A549 (cell line): ENCODE measurements at regions of chr2 and their contacts with region 1.

Region 1: GRCh38 chr2:26745609-26746327 is 18.3 kb upstream of the SLC35F6 start:
- DNase-seq: peak; percentile 84 to 88
- ATAC-seq: peak; percentile 89 to 94
- H3K4me3 ChIP-seq: no peak overlapping the region
- H3K27ac ChIP-seq: peak overlapping the region; percentile 53 to 94; a peak in 5 of 6 replicates
- H3K4me1 ChIP-seq: peaks cover 41% of the 10 kb centered on the region
- CTCF ChIP-seq: peak; percentile 99
- EP300 ChIP-seq: no peak
- POLR2A ChIP-seq: no peak
- RAD21 ChIP-seq: peak; percentile 100

Region 2: GRCh38 chr2:26503231-26503880 is 242.4 kb before region 1 on chr2:
- CTCF ChIA-PET with region 1: interaction called, 25 read pairs
- POLR2A ChIA-PET with region 1: no interaction called
- DNase-seq: peak; percentile 91 to 99
- ATAC-seq: peak; percentile 95 to 99
- H3K4me3 ChIP-seq: peak overlapping the region; percentile 63
- H3K27ac ChIP-seq: peak overlapping the region; percentile 82 to 91
- H3K4me1 ChIP-seq: peaks cover 5% of the 10 kb centered on the region; the same call in 1 of the 3 replicates
- CTCF ChIP-seq: peak; percentile 100
- EP300 ChIP-seq: no peak
- POLR2A ChIP-seq: peak; percentile 91
- RAD21 ChIP-seq: peak; percentile 45 to 84; a peak in 4 of 5 replicates

Region 3: GRCh38 chr2:26561918-26562810 is 183.6 kb before region 1 on chr2:
- CTCF ChIA-PET with region 1: interaction called, 14 read pairs
- POLR2A ChIA-PET with region 1: no interaction called
- DNase-seq: peak; percentile 64 to 92
- ATAC-seq: peak; percentile 84 to 93
- H3K4me3 ChIP-seq: peak overlapping the region; percentile 50
- H3K27ac ChIP-seq: peak overlapping the region; percentile 51 to 76
- H3K4me1 ChIP-seq: peaks cover 8% of the 10 kb centered on the region; the same call in 1 of the 3 replicates
- CTCF ChIP-seq: peak; percentile 51
- EP300 ChIP-seq: no peak
- POLR2A ChIP-seq: no peak
- RAD21 ChIP-seq: peak; percentile 13 to 49; a peak in 3 of 5 replicates

Region 4: GRCh38 chr2:26605195-26605998 is 140.4 kb before region 1 on chr2:
- CTCF ChIA-PET with region 1: interaction called, 736 read pairs
- POLR2A ChIA-PET with region 1: no interaction called
- DNase-seq: peak; percentile 73 to 78
- ATAC-seq: peak; percentile 79 to 93
- H3K4me3 ChIP-seq: no peak overlapping the region
- H3K27ac ChIP-seq: peak overlapping the region; percentile 57 to 80; a peak in 5 of 6 replicates
- H3K4me1 ChIP-seq: peaks cover 21% of the 10 kb centered on the region
- CTCF ChIP-seq: peak; percentile 97
- EP300 ChIP-seq: no peak
- POLR2A ChIP-seq: no peak
- RAD21 ChIP-seq: peak; percentile 99

Region 5: GRCh38 chr2:26647059-26647657 is 98.6 kb before region 1 on chr2:
- CTCF ChIA-PET with region 1: interaction called, 20 read pairs
- POLR2A ChIA-PET with region 1: no interaction called
- DNase-seq: no peak
- ATAC-seq: peak in 1 of 2 experiments; percentile 16; a peak in 2 of 6 replicates
- H3K4me3 ChIP-seq: no peak overlapping the region
- H3K27ac ChIP-seq: no peak overlapping the region
- H3K4me1 ChIP-seq: no peaks in the 10 kb centered on the region
- CTCF ChIP-seq: no peak
- EP300 ChIP-seq: no peak
- POLR2A ChIP-seq: no peak
- RAD21 ChIP-seq: no peak

Region 6: DNA sequence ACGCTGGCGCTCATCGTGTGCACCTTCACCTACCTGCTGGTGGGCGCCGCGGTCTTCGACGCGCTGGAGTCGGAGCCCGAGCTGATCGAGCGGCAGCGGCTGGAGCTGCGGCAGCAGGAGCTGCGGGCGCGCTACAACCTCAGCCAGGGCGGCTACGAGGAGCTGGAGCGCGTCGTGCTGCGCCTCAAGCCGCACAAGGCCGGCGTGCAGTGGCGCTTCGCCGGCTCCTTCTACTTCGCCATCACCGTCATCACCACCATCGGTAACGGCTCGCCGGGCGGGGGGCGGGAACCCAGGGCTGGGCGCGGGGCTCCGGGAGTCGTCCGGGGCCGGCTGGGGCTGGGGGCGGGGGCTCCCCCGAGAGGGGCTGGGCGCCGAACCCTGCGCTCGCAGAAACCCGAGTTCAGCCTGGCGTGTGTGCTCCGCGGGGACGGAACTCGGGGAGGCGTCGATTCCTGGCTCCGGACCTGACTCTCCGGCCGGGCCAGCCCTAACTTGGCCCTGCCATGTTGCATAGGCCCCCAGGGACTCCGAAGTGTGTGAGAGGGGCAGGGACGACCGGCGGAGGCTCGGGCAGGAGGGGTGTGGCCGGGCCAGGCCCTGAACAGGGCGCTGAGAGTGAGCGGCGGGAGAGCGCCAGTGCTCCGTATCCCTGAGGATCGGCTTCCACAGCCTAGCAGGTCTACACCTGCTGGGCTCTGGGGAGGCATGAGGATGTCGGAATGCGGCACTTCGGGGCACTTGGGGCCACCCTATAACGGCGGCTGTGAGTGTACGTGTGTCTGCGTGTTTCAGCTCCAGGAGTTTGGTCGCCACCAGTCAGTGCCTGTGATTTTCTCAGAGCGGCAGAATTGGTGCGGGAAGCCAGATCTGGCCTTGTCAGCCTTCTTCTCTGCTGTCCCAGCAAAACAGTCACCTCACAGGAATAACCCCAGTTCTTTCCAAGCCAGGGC is 52.6 kb before region 1 on chr2:
- CTCF ChIA-PET with region 1: interaction called, 27 read pairs
- POLR2A ChIA-PET with region 1: no interaction called
- DNase-seq: peak in 1 of 2 experiments; percentile 25
- ATAC-seq: peak; percentile 20 to 32; a peak in 4 of 6 replicates
- H3K4me3 ChIP-seq: peak overlapping the region; percentile 36
- H3K27ac ChIP-seq: peak overlapping the region in 1 of 2 experiments; percentile 40; a peak in 2 of 6 replicates
- H3K4me1 ChIP-seq: peaks cover 25% of the 10 kb centered on the region
- CTCF ChIP-seq: no peak
- EP300 ChIP-seq: no peak
- POLR2A ChIP-seq: no peak
- RAD21 ChIP-seq: no peak

Region 7: DNA sequence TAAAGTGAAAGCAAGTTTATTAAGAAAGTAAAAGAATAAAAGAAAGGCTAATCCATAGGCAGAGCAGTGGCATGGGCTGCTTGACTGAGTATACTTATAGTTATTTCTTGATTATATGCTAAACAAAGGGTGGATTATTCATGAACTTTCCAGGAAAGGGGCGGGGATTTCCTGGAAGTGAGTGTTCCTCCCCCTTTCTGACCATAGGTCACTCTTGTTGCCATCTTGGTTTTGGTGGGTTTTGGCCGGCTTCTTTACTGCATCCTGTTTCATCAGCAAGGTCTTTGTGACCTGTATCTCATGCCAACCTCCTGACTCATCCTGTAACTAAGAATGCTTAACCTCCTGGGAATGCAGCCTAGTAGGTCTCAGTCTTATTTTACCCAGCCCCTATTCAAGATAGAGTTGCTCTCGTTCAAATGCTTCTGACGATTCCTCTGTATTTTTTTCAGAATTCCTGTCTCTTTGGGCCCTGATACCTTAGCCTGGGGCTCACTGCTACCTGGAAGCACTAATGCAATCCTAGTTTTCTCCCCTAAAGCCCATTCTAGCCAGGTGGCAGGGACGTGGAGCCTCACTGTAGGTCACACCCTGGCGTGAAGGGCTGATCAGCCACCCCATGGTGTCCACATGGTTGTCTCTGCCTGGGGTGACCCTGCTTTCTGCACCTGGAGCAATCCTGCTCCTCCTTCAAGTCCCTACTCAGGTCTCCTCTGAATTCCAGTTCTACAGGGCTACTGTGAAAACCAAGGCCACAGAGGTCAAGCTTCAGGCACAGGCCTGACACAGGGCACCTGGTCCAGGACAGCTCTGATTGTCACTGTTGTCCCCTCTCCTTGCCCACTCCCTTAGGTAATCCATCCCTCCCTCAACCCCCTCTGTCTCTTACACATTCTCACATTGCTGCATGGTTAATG is 12.4 kb after region 1 on chr2:
- CTCF ChIA-PET with region 1: interaction called, 51 read pairs
- POLR2A ChIA-PET with region 1: no interaction called
- DNase-seq: peak; percentile 70 to 98
- ATAC-seq: peak; percentile 70 to 91
- H3K4me3 ChIP-seq: no peak overlapping the region
- H3K27ac ChIP-seq: peak overlapping the region; percentile 97
- H3K4me1 ChIP-seq: peaks cover 57% of the 10 kb centered on the region
- CTCF ChIP-seq: no peak
- EP300 ChIP-seq: peak; percentile 86 to 94
- POLR2A ChIP-seq: no peak
- RAD21 ChIP-seq: peak; percentile 29 to 32; a peak in 1 of 5 replicates